ENCODE measurements at regions of chr17 and their contacts with region 1.

Region 1: DNA sequence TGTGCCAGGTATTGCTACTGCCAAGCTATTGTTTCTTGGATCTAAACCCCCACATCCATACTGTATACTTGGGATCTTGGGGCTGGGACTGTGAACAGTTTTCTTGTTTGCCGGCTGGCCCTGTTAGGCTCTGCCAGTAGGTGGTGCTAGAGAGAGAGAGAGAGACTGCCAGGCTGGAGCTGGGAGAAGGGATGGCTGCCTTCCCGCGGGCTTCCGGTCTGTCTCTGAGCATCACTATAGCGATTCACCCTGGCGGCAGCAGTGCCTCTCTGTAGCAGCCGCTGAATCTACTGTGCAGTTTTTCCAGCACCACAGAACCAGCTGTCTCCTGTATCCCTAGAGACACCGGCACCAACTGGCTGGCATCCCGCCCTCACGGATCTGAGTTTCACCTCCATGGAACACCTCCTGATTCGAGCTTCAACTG is 201.2 kb downstream of the UTP18 start:
- DNase-seq: peak; percentile 63
- ATAC-seq: peak; percentile 72
- H3K4me3 Mint-ChIP-seq: no peak overlapping the region
- H3K27ac Mint-ChIP-seq: no peak overlapping the region
- H3K4me1 Mint-ChIP-seq: no peaks in the 10 kb centered on the region
- H3K27me3 Mint-ChIP-seq: peaks cover 1% of the 10 kb centered on the region
- CTCF ChIP-seq: peak; percentile 76

Region 2: GRCh38 chr17:51435641-51436091 is 25.9 kb before region 1 on chr17:
- CTCF ChIA-PET with region 1: interaction called, 27 read pairs
- POLR2A ChIA-PET with region 1: interaction called, 3 read pairs
- intact Hi-C with region 1: no loop called
- DNase-seq: peak; percentile 47
- ATAC-seq: no peak
- H3K4me3 Mint-ChIP-seq: no peak overlapping the region
- H3K27ac Mint-ChIP-seq: no peak overlapping the region
- H3K4me1 Mint-ChIP-seq: peaks cover 17% of the 10 kb centered on the region
- H3K27me3 Mint-ChIP-seq: peaks cover 2% of the 10 kb centered on the region
- CTCF ChIP-seq: no peak

Region 3: DNA sequence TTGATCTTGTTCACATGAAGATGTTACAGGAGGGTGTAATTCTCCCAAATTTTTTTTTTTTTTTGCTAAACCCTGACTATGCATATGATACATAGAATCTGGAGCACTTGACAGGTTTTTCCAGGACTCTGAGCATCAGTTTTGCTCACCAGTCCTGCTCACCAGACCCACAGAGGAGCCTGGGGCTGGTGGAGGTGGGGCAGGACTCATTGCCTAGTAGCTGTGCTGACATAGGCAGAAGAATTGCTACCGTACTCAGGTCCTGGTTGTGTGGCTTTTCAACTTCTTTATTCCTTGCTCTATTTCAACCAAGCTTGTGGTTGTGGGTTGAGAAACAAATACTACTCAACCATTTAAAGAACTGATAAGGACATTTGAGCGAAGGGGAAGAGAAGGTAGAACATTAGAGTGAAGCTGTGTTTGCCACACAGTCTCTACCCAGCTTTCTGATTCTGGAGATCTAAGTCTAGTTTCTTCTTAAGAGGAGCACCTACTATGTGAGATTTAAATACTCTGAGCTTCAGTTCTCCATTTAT is 11.1 kb after region 1 on chr17:
- CTCF ChIA-PET with region 1: interaction called, 23 read pairs
- POLR2A ChIA-PET with region 1: interaction called, 3 read pairs
- intact Hi-C with region 1: no loop called
- DNase-seq: no peak
- ATAC-seq: no peak
- H3K4me3 Mint-ChIP-seq: no peak overlapping the region
- H3K27ac Mint-ChIP-seq: no peak overlapping the region
- H3K4me1 Mint-ChIP-seq: no peaks in the 10 kb centered on the region
- H3K27me3 Mint-ChIP-seq: no peaks in the 10 kb centered on the region
- CTCF ChIP-seq: no peak

Measured in activated CD8-positive, alpha-beta T cell treated with anti-CD3 and anti-CD28 coated beads for 36 hours (primary cell).